ENCODE measurements at regions of chr5 and their contacts with region 1.

Region 1: DNA sequence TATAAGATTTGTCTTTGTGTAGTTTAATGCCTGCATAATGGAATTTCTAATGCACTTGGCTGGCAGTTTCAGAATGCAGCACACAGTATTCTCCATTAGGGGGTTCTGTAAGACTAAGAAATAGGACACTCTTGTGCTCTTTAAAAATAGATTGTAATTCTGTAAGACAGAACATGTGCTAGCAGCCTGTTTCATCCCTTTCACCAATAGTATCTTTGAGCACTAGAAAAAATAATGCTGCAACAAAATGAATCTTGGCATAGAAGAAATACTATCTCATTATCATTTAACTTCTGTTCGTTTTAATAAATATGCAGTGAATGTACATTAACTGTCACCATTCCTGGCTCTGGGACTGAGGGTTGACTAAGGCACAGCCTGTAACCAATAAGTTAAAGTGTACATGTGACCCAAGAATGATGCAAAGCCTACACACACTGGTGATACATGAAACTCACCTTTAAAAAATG is 23.8 kb upstream of the ZNF622 start:
- DNase-seq: no peak
- ATAC-seq: peak; percentile 54
- H3K4me3 Mint-ChIP-seq: no peak overlapping the region
- H3K27ac Mint-ChIP-seq: no peak overlapping the region
- H3K4me1 Mint-ChIP-seq: no peaks in the 10 kb centered on the region
- H3K27me3 Mint-ChIP-seq: no peaks in the 10 kb centered on the region
- CTCF ChIP-seq: no peak

Region 2: DNA sequence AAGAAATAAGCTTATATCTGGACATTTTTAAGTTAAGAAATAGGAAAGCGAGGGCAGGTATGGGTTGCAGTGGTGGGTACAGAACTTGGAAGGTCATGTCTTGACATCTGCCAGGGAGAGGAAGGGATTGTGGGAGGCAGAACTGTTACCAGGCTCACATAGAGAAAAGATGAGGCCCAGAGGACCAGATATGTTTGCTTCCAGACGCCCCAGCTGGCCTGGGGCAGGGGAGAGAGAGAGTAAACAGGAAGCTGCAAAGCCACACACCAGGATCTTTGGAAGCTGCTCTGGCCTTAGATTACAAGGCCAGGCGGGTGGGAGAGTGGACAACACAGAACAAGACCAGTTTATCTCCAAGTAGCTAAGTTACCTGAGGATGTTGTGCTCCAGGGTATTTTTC is 380.9 kb before region 1 on chr5:
- CTCF ChIA-PET with region 1: no interaction called
- POLR2A ChIA-PET with region 1: no interaction called
- intact Hi-C with region 1: no loop called
- DNase-seq: no peak
- ATAC-seq: no peak
- H3K4me3 Mint-ChIP-seq: no peak overlapping the region
- H3K27ac Mint-ChIP-seq: no peak overlapping the region
- H3K4me1 Mint-ChIP-seq: no peaks in the 10 kb centered on the region
- H3K27me3 Mint-ChIP-seq: no peaks in the 10 kb centered on the region
- CTCF ChIP-seq: no peak

Region 3: DNA sequence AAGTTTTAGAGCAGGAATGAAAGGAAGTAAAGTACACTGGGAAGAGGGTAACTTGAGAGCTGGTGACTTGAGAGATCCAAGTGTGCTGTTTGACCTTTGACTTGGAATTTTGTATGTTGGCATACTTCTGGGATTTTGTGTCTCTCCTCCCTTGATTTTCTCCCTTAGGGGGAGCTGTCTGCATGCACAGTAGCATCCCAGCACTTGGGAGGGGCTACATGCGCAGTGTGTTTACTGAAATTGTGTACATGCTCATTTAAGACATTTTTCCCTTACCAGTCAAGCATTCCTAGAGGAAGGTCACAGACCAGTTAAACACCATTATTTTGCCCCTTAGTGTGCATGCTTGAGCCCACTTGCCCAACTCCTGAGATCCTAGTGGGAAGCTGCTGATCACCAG is 143.9 kb before region 1 on chr5:
- CTCF ChIA-PET with region 1: no interaction called
- POLR2A ChIA-PET with region 1: no interaction called
- intact Hi-C with region 1: no loop called
- DNase-seq: no peak
- ATAC-seq: no peak
- H3K4me3 Mint-ChIP-seq: no peak overlapping the region
- H3K27ac Mint-ChIP-seq: no peak overlapping the region
- H3K4me1 Mint-ChIP-seq: no peaks in the 10 kb centered on the region
- H3K27me3 Mint-ChIP-seq: no peaks in the 10 kb centered on the region
- CTCF ChIP-seq: no peak

Region 4: GRCh38 chr5:16552666-16553343 is 63.4 kb after region 1 on chr5:
- CTCF ChIA-PET with region 1: interaction called, 7 read pairs
- POLR2A ChIA-PET with region 1: no interaction called
- intact Hi-C with region 1: loop called (anchors 1 kb)
- DNase-seq: no peak
- ATAC-seq: peak; percentile 79
- H3K4me3 Mint-ChIP-seq: no peak overlapping the region
- H3K27ac Mint-ChIP-seq: no peak overlapping the region
- H3K4me1 Mint-ChIP-seq: peaks cover 34% of the 10 kb centered on the region
- H3K27me3 Mint-ChIP-seq: no peaks in the 10 kb centered on the region
- CTCF ChIP-seq: no peak

Region 5: GRCh38 chr5:16585041-16585667 is 95.8 kb after region 1 on chr5:
- CTCF ChIA-PET with region 1: interaction called, 5 read pairs
- POLR2A ChIA-PET with region 1: no interaction called
- intact Hi-C with region 1: loop called (anchors 1 kb)
- DNase-seq: no peak
- ATAC-seq: peak; percentile 56
- H3K4me3 Mint-ChIP-seq: no peak overlapping the region
- H3K27ac Mint-ChIP-seq: no peak overlapping the region
- H3K4me1 Mint-ChIP-seq: peaks cover 8% of the 10 kb centered on the region
- H3K27me3 Mint-ChIP-seq: no peaks in the 10 kb centered on the region
- CTCF ChIP-seq: no peak

Region 6: DNA sequence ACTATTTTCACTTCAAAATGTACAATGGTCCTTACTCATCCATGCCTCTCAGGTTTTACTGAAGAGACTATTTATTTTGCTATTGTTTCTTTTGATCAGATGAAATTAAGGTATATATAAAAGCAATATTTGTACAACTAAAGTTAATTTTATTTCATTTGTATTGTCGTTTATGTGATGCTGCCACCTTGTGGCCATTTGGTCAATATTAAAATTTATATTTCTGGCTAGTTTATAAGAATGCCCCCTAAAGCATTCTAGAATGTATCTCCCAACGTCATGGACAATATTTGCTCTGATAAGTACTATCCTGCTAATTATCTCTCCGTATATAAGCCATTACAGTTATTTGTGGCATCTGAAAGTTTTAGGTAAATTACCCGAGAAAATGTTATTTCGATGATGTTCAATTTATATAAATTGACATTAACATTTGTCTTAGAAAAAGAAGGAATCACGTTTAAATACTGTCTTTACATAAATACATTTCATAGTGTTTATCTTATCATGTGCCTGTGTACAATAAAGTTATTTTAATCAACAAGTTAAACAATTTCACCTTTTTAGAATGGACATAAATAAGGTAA is 1824.9 kb after region 1 on chr5:
- CTCF ChIA-PET with region 1: no interaction called
- POLR2A ChIA-PET with region 1: no interaction called
- intact Hi-C with region 1: loop called (anchors 5 kb)
- DNase-seq: no peak
- ATAC-seq: no peak
- H3K4me3 Mint-ChIP-seq: no peak overlapping the region
- H3K27ac Mint-ChIP-seq: no peak overlapping the region
- H3K4me1 Mint-ChIP-seq: no peaks in the 10 kb centered on the region
- H3K27me3 Mint-ChIP-seq: no peaks in the 10 kb centered on the region
- CTCF ChIP-seq: no peak

Measured in activated B cell treated with CpG ODN at 0.5 μM for 24 hours (primary cell).